Endothelial cell of umbilical vein (primary cell): ENCODE measurements at regions of chr1 and their contacts with region 1.

Region 1: GRCh38 chr1:114757455-114758250 is at the start of gene CSDE1:
- DNase-seq: peak; percentile 99
- H3K4me3 ChIP-seq: peak within 1 kb of the TSS; percentile 75 to 93 (median 91)
- H3K27ac ChIP-seq: peak within 1 kb of the TSS; percentile 98
- H3K4me1 ChIP-seq: peaks cover 28% of the 10 kb centered on the region
- H3K27me3 ChIP-seq: no peaks in the 10 kb centered on the region
- CTCF ChIP-seq: peak; percentile 31 to 36
- POLR2A ChIP-seq: peak; percentile 91
- total RNA-seq, gene CSDE1: 486 and 492 TPM in 2 replicates

Region 2: DNA sequence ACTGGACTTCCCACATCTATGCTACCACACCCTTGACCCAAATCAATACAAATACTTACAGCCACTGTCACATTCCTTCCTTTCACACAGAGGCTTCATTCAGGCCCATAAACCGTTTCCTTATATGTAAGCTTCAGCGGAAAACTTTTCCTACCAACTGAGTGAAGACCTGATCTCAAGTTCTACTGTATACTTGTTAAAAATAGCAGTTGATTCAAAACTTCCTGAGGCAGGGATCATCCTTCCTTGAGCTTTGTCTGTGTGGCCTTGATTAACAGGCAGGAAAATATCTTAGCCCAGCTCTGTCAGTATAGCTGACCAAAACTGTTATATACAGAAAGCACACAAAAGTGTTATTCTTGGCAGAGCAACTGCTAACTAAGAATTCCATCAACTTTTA is 130.5 kb before region 1 on chr1:
- CTCF ChIA-PET with region 1: no interaction called
- POLR2A ChIA-PET with region 1: no interaction called
- dilution Hi-C with region 1: no loop called
- intact Hi-C with region 1: no loop called
- DNase-seq: no peak
- H3K4me3 ChIP-seq: no peak overlapping the region
- H3K27ac ChIP-seq: no peak overlapping the region
- H3K4me1 ChIP-seq: no peaks in the 10 kb centered on the region
- H3K27me3 ChIP-seq: no peaks in the 10 kb centered on the region
- CTCF ChIP-seq: no peak
- POLR2A ChIP-seq: no peak

Region 3: DNA sequence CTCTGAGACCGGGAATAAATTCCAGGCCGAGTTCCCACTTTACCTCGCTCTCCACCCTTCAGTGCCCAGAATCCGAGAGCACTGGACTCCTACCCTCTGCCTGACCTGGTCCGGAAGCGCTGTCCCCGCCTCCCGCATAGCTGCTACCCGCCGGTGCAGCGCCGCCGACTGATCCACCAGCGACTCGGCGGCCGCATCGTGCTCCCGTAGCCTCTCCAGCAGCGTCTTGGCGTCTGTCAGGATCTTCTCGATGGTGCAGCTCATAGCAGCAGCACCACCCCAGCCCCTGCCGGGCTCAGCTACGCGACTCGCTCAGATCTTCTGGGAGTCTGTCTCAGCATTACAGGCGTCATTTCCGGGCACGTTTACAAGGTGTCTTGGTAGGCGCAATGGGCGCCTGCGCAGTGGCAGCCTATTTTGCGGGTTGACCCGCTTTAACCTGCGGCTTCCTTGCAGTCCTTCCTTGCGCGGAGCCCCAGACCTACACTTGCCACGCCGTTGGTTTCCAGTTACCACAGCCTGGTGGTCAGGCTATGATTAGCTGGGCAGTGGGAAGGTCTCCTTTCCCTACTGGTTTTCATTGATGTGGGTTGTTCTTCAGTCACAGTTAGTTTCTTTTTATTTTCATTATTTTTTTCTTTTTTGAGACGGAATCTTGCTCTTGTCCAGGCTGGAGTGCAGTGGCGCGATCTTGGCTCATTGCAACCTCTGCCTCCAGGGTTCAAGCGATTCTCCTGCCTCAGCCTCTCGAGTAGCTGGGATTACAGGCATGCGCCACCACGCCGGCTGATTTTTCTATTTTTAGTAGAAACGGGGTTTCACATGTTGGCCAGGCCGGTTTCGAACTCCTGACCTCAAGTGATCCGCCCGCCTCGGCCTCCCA is 22.9 kb after region 1 on chr1 and contains the start of gene SIKE1:
- CTCF ChIA-PET with region 1: no interaction called
- POLR2A ChIA-PET with region 1: interaction called, 3 read pairs
- dilution Hi-C with region 1: no loop called
- intact Hi-C with region 1: loop called (anchors 1 kb)
- DNase-seq: peak; percentile 92
- H3K4me3 ChIP-seq: peak within 1 kb of the TSS; percentile 64 to 87 (median 84)
- H3K27ac ChIP-seq: peak within 1 kb of the TSS; percentile 62
- H3K4me1 ChIP-seq: peaks cover 9% of the 10 kb centered on the region
- H3K27me3 ChIP-seq: peaks cover 5% of the 10 kb centered on the region in 2 experiments
- CTCF ChIP-seq: no peak
- POLR2A ChIP-seq: peak; percentile 96
- total RNA-seq, gene SIKE1: 38.6 and 46.6 TPM in 2 replicates